ENCODE measurements at regions of chr17 and their contacts with region 1.

Region 1: DNA sequence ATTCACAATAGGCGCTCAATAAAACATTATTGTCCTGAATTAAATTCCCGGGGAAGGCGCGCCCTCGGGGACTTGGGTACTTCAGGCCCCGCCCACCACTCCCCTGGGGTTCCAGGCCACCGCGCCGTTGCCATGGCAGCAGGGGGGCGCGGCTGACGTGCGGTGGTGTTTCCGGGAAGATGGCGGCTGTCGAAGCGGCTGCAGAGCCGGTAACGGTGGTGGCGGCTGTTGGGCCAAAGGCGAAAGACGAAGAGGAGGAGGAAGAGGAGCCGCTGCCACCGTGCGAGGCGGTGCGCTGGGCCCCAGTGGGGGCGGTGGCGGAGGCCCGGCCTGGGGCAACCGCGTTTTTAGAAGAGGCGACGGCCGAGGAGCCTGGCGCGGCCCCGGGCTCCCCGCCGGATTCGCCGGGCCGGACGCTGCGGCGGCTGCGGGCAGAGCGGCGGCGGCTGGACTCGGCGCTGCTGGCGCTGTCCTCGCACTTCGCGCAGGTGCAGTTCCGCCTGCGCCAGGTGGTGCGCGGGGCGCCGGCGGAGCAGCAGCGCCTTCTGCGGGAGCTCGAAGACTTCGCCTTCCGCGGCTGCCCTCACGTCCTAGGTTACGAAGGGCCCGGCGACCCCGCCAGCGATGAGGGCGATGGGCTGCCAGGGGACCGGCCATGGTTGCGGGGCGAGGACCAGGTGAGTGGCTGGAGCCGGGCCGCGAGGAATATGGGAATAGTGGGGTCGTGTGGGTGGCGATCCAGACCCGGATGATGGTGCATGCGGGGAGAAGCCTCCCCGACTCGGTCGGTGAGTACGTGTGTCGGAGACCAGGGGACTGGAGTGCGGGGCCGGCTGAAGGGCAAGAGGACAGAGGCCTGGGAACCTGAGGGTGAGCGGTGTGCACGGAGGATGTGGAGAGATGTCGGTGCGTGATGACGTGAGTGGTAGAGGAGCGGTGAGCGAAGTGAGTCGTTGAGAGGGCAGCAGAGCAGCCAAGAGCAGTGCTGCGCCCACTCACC is at the start of gene RUNDC1:
- DNase-seq: peak; percentile 86 to 95
- ATAC-seq: peak; percentile 85 to 89 (median 89)
- H3K4me3 ChIP-seq: peak within 1 kb of the TSS; percentile 82
- H3K4me3 Mint-ChIP-seq: peak within 1 kb of the TSS; percentile 94
- H3K27ac ChIP-seq: peak within 1 kb of the TSS; percentile 75
- H3K27ac Mint-ChIP-seq: peak within 1 kb of the TSS; percentile 79 to 95
- H3K4me1 ChIP-seq: peaks cover 25% of the 10 kb centered on the region
- H3K4me1 Mint-ChIP-seq: peaks cover 19 to 32% of the 10 kb centered on the region in 2 donors
- H3K27me3 ChIP-seq: no peaks in the 10 kb centered on the region
- H3K27me3 Mint-ChIP-seq: no peaks in the 10 kb centered on the region
- CTCF ChIP-seq: peak; percentile 9
- total RNA-seq, gene RUNDC1: 11.6 to 15.8 (median 14.6) TPM

Region 2: GRCh38 chr17:42832974-42833766 is 147.5 kb before region 1 on chr17 and contains the start of gene PSME3:
- intact Hi-C with region 1: loop called (anchors 5 kb)
- DNase-seq: peak; percentile 90 to 94
- ATAC-seq: peak; percentile 89 to 94 (median 92)
- H3K4me3 ChIP-seq: peak within 1 kb of the TSS; percentile 85
- H3K4me3 Mint-ChIP-seq: peak within 1 kb of the TSS; percentile 97
- H3K27ac ChIP-seq: peak within 1 kb of the TSS; percentile 93
- H3K27ac Mint-ChIP-seq: peak within 1 kb of the TSS; percentile 98
- H3K4me1 ChIP-seq: peaks cover 7% of the 10 kb centered on the region
- H3K4me1 Mint-ChIP-seq: peaks cover 22 to 29% of the 10 kb centered on the region in 2 donors
- H3K27me3 ChIP-seq: no peaks in the 10 kb centered on the region
- H3K27me3 Mint-ChIP-seq: peaks cover 0 to 5% of the 10 kb centered on the region in 2 donors
- CTCF ChIP-seq: no peak
- total RNA-seq, gene PSME3: 82.8 to 92.5 (median 90.6) TPM

Region 3: GRCh38 chr17:42997984-42998938 is 17.6 kb after region 1 on chr17 and contains the start of gene RPL27:
- intact Hi-C with region 1: no loop called
- DNase-seq: peak; percentile 98 to 100
- ATAC-seq: peak; percentile 93 to 99 (median 95)
- H3K4me3 ChIP-seq: peak within 1 kb of the TSS; percentile 90
- H3K4me3 Mint-ChIP-seq: peak within 1 kb of the TSS; percentile 97
- H3K27ac ChIP-seq: peak within 1 kb of the TSS; percentile 93
- H3K27ac Mint-ChIP-seq: peak within 1 kb of the TSS; percentile 95 to 98
- H3K4me1 ChIP-seq: peaks cover 18% of the 10 kb centered on the region
- H3K4me1 Mint-ChIP-seq: peaks cover 25 to 28% of the 10 kb centered on the region in 2 donors
- H3K27me3 ChIP-seq: no peaks in the 10 kb centered on the region
- H3K27me3 Mint-ChIP-seq: no peaks in the 10 kb centered on the region
- CTCF ChIP-seq: peak; percentile 94
- total RNA-seq, gene RPL27: 555 to 671 (median 608) TPM

Measured in natural killer cell (primary cell).